Breast epithelium (tissue), 4 donors: ENCODE measurements at regions of chr7 and their contacts with region 1.

Region 1: DNA sequence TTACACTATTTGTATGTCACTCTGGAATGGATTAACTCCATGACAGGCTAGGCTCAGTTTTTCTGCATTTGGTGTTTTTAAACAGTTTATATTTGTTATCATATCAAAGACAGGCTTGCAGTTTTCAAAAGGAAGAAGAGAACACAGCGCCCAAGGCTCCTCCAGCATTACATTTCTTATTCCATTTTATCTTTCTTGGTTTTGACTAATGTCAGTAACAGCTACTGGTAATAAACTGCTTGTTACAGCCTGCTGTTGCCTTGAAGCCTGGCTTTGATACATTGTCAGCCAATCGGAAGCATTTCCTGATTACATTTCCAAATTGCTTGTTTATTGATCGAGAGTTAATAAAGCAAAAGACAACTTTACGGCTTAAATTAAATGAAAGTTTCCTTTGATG is 166.0 kb upstream of the MDFIC start:
- DNase-seq: no peak
- H3K4me3 ChIP-seq: no peak overlapping the region
- H3K27ac ChIP-seq: no peak overlapping the region
- H3K4me1 ChIP-seq: no peaks in the 10 kb centered on the region
- H3K27me3 ChIP-seq: no peaks in the 10 kb centered on the region
- CTCF ChIP-seq: no peak
- POLR2A ChIP-seq: no peak

Region 2: DNA sequence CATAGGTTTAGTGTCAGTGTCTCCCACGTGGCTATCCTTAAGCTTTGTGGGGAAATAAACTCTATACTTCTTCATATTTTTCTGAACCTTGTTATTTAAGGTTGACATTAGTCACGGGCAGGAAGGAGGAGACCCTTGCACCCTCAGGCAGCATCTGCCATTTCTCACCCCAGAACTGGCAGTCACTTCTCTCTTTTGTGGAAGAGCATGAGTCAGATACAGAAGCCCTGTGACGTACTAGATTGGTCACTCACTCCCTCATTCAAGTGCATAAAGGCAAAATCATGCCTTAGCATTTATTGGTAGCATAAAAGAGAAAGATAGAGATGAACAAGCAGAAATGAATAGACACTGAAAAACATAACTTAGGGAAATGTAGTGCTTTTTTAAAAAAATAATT is 39.9 kb before region 1 on chr7:
- intact Hi-C with region 1: loop called (anchors 2 kb)
- DNase-seq: no peak
- H3K4me3 ChIP-seq: no peak overlapping the region
- H3K27ac ChIP-seq: no peak overlapping the region
- H3K4me1 ChIP-seq: no peaks in the 10 kb centered on the region
- H3K27me3 ChIP-seq: no peaks in the 10 kb centered on the region
- CTCF ChIP-seq: no peak
- POLR2A ChIP-seq: no peak

Region 3: GRCh38 chr7:114740095-114740494 is 15.8 kb before region 1 on chr7:
- intact Hi-C with region 1: no loop called
- DNase-seq: no peak
- H3K4me3 ChIP-seq: no peak overlapping the region
- H3K27ac ChIP-seq: no peak overlapping the region
- H3K4me1 ChIP-seq: no peaks in the 10 kb centered on the region
- H3K27me3 ChIP-seq: no peaks in the 10 kb centered on the region
- CTCF ChIP-seq: no peak
- POLR2A ChIP-seq: no peak